Activated CD4-positive, alpha-beta T cell treated with anti-CD3 and anti-CD28 coated beads, Interleukin-2, amount 10 ng/mL, durations not matched to agents 7 days and 5 days (primary cell): ENCODE measurements at regions of chr10 and their contacts with region 1.

Region 1: DNA sequence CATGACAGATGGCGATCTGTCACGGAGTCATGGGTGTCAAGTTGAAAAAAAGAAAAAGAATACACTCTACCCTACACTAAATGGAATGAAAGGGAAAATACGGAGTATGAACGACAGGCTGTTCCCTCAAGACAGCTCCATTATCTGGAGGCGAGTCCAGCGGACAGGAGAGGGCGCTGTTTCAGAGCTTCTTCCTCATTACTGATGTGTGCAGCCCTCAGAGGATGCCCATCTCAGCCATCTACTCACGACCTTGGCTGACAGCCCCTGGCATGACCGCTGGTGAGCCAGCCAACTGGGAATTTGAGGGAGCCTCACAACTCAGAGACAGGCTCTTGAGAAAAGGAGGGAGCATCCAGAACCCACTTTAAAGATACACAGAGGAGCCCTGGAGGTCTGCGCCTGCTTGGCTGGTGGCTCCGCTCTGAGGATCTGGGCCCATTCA is 49.6 kb upstream of the SMNDC1 start:
- DNase-seq: peak; percentile 82
- H3K4me3 Mint-ChIP-seq: peak overlapping the region; percentile 8
- H3K27ac Mint-ChIP-seq: peak overlapping the region; percentile 76
- H3K4me1 Mint-ChIP-seq: peaks cover 58% of the 10 kb centered on the region
- H3K27me3 Mint-ChIP-seq: peaks cover 3% of the 10 kb centered on the region

Region 2: DNA sequence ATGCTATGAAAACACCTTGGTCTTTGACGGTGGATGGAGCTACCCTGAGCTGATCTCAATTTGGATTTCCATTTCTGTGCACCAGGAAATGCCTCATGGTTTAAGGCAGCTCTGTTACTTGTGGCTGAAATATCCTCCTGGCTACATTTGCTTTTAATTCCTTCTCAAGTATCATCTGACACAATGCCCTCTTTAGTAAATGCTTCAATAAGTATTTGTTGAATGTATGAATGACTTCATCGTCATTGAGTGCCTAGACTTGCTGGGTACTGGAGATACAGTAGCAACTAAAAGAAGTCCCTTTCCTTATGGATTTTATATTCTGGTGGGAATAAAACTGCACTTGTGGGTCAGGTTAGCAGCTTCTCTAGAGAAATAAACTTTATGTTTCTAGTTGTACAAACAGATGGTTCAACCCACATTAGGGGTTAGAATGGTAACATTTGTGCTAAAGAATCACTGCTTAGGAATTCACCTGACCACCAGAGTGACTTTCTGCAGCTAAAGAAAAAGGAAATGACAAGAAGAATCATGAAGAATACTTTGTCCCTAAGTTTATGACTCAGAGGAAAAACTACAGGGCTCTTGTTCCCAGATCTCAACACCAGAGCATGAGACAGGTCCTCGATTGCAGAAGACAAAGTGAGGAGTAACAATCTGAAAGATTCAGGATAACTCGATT is 27.9 kb before region 1 on chr10:
- CTCF ChIA-PET with region 1: interaction called, 11 read pairs
- POLR2A ChIA-PET with region 1: no interaction called
- DNase-seq: no peak
- H3K4me3 Mint-ChIP-seq: no peak overlapping the region
- H3K27ac Mint-ChIP-seq: no peak overlapping the region
- H3K4me1 Mint-ChIP-seq: peaks cover 18% of the 10 kb centered on the region
- H3K27me3 Mint-ChIP-seq: peaks cover 5% of the 10 kb centered on the region

Region 3: DNA sequence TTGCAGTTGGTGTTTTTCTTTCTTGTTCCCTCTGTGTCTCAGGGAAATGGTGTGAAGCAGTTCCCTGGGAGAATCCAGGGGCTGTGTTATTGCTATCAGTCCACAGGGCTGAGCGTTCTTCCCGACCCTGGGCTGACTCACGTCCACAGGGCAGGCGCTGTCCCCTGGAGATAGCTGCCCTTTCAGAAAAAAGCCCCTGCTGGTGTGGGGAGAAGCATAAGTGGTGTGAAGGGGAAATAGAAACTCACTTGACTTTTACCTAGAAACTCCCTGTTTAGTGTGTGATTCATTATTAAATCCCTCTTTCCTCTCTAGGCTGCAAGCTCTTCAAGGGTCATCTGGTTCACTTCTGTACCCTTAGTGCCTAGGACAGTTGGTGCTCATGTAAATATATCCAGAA is 13.7 kb after region 1 on chr10:
- CTCF ChIA-PET with region 1: interaction called, 88 read pairs
- POLR2A ChIA-PET with region 1: interaction called, 7 read pairs
- DNase-seq: no peak
- H3K4me3 Mint-ChIP-seq: no peak overlapping the region
- H3K27ac Mint-ChIP-seq: no peak overlapping the region
- H3K4me1 Mint-ChIP-seq: peaks cover 29% of the 10 kb centered on the region
- H3K27me3 Mint-ChIP-seq: no peaks in the 10 kb centered on the region

Region 4: DNA sequence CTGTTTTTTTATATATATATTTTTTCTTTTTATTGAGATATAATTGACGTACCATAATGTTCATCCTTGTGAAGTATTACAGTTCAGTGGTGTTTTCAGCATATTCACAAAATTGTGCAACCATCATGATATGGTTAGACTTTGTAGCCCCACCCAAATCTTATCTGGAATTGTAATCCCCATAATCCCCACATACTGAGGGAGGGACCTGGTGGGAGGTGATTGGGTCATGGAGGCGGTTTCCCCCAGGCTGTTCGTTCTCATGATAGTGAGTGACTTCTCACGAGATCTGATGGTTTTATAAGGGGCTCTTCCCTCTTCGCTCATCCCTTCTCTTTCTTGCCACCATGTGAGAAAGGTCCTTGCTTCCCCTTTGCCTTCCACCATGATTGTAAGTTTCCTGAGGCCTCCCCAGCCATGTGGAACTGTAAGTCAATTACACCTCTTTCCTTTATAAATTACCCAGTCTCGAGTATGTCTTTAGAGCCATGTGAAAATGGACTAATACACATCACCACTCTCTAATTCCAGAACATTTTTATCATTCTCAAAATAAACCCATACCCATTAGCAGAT is 24.3 kb after region 1 on chr10:
- CTCF ChIA-PET with region 1: no interaction called
- POLR2A ChIA-PET with region 1: no interaction called
- DNase-seq: no peak
- H3K4me3 Mint-ChIP-seq: no peak overlapping the region
- H3K27ac Mint-ChIP-seq: no peak overlapping the region
- H3K4me1 Mint-ChIP-seq: peaks cover 5% of the 10 kb centered on the region
- H3K27me3 Mint-ChIP-seq: no peaks in the 10 kb centered on the region

Region 5: GRCh38 chr10:110420401-110421193 is 66.3 kb after region 1 on chr10:
- CTCF ChIA-PET with region 1: interaction called, 37 read pairs
- POLR2A ChIA-PET with region 1: no interaction called
- DNase-seq: no peak
- H3K4me3 Mint-ChIP-seq: no peak overlapping the region
- H3K27ac Mint-ChIP-seq: peak overlapping the region; percentile 63
- H3K4me1 Mint-ChIP-seq: peaks cover 39% of the 10 kb centered on the region
- H3K27me3 Mint-ChIP-seq: no peaks in the 10 kb centered on the region

Region 6: GRCh38 chr10:110502851-110503301 is 148.5 kb after region 1 on chr10:
- CTCF ChIA-PET with region 1: interaction called, 21 read pairs
- POLR2A ChIA-PET with region 1: interaction called, 4 read pairs
- DNase-seq: peak; percentile 36
- H3K4me3 Mint-ChIP-seq: peak overlapping the region; percentile 58
- H3K27ac Mint-ChIP-seq: peak overlapping the region; percentile 91
- H3K4me1 Mint-ChIP-seq: peaks cover 87% of the 10 kb centered on the region
- H3K27me3 Mint-ChIP-seq: no peaks in the 10 kb centered on the region